ENCODE measurements at regions of chr19 and their contacts with region 1.

Region 1: GRCh38 chr19:10888421-10888866 is 17.1 kb downstream of the CARM1 start:
- DNase-seq: peak; percentile 77
- H3K4me3 ChIP-seq: peak overlapping the region; percentile 40
- H3K27ac ChIP-seq: peak overlapping the region; percentile 91
- H3K4me1 ChIP-seq: peaks cover 37% of the 10 kb centered on the region
- CTCF ChIP-seq: no peak

Region 2: DNA sequence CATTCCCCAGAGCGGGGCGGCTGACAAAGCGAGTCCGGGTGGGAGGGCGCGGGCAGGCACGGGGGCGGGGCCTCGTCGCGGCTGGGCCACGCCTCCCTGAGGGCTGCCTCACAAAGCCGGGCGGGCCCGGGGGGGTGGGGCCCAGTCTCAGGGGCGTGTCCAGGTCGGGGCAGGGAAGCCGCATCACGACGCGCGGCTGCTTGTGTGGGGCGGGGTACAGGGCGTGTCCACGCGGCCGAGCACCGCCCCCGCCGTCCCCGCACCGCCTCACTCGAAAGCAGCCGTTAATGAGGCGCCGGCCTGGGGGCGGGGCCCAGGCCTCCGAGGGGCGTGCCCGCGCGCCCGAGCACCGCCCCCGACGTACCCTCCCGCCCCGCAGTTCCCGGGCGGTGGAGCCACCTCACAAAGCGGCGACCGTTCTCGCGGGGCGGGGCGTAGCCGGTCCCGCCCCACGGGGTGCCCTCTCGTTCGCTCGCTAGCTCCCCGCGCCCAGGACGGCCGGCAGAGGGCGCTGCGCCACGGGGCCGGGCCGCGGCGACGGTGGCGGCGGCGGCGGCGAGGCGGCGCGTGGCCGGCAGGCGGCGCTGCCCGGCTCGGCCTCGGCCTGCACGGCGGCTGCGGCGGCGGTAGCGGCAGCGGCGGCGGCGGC is 17.4 kb before region 1 on chr19 and contains the start of gene CARM1:
- CTCF ChIA-PET with region 1: interaction called, 9 read pairs
- POLR2A ChIA-PET with region 1: interaction called, 34 read pairs
- intact Hi-C with region 1: loop called (anchors 1 kb)
- DNase-seq: peak; percentile 97
- H3K4me3 ChIP-seq: peak within 1 kb of the TSS; percentile 99
- H3K27ac ChIP-seq: peak within 1 kb of the TSS; percentile 90
- H3K4me1 ChIP-seq: peaks cover 54% of the 10 kb centered on the region
- CTCF ChIP-seq: peak; percentile 52; the same call in 1 of the 2 replicates
- total RNA-seq, gene CARM1: 35.1 and 41.2 TPM in 2 replicates

Region 3: GRCh38 chr19:10876459-10877240 is 11.8 kb before region 1 on chr19:
- CTCF ChIA-PET with region 1: interaction called, 11 read pairs
- POLR2A ChIA-PET with region 1: interaction called, 34 read pairs
- intact Hi-C with region 1: loop called (anchors 1 kb)
- DNase-seq: no peak
- H3K4me3 ChIP-seq: no peak overlapping the region
- H3K27ac ChIP-seq: peak overlapping the region; percentile 45
- H3K4me1 ChIP-seq: peaks cover 68% of the 10 kb centered on the region
- CTCF ChIP-seq: no peak

Region 4: DNA sequence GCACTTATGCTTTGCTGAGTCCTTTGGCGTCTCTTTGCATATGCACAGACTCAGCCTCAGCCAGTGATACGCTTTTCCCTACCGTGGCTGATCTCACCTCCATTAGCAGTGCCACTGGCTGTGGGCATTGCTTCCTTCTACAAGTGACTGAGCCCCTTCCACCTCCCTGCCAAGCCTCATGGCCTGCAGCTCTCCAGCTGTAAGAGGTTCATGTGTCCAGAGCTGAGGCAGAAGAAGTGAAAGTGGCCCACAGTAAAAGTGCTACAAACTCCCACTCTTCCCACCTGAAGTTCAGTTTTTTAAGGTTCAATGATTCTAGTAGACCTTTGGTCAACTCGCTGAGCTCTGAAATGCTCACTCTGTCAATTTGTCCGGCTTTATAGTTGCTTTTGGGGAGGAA is 117.1 kb after region 1 on chr19:
- CTCF ChIA-PET with region 1: no interaction called
- POLR2A ChIA-PET with region 1: no interaction called
- intact Hi-C with region 1: no loop called
- DNase-seq: no peak
- H3K4me3 ChIP-seq: no peak overlapping the region
- H3K27ac ChIP-seq: no peak overlapping the region
- H3K4me1 ChIP-seq: no peaks in the 10 kb centered on the region
- CTCF ChIP-seq: no peak

Measured in OCI-LY7 (cell line).